ENCODE measurements at regions of chr22 and their contacts with region 1.

Region 1: DNA sequence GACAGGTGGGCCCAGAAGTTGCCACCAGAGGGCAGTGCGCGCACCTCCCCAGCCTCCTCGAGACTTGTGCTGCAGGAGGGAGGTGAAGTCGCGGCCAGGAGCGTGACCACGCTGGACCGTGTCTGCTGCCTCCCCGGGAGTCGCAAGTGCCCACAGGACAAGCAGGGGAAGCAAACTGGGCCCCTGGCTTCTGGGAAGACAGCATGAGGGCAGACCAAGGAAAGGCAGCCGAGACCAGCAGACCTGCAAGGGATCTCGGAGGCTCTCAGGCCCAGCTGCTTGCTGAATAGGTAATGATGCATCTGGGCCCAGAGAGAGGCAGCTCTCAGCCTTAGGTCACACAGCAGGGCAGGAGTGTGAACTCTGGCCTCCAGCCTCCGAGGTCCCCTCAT is 17.0 kb upstream of the IL2RB start:
- DNase-seq: peak; percentile 70 to 87 (median 75)
- H3K4me3 ChIP-seq: peak overlapping the region; percentile 63
- H3K4me3 Mint-ChIP-seq: peak overlapping the region; percentile 82 to 97 (median 89)
- H3K27ac ChIP-seq: peak overlapping the region; percentile 48
- H3K27ac Mint-ChIP-seq: peak overlapping the region; percentile 85 to 99 (median 96)
- H3K4me1 ChIP-seq: peaks cover 89% of the 10 kb centered on the region
- H3K4me1 Mint-ChIP-seq: peaks cover 95 to 100% (median 98%) of the 10 kb centered on the region in 3 donors
- H3K27me3 ChIP-seq: no peaks in the 10 kb centered on the region
- H3K27me3 Mint-ChIP-seq: no peaks in the 10 kb centered on the region

Region 2: DNA sequence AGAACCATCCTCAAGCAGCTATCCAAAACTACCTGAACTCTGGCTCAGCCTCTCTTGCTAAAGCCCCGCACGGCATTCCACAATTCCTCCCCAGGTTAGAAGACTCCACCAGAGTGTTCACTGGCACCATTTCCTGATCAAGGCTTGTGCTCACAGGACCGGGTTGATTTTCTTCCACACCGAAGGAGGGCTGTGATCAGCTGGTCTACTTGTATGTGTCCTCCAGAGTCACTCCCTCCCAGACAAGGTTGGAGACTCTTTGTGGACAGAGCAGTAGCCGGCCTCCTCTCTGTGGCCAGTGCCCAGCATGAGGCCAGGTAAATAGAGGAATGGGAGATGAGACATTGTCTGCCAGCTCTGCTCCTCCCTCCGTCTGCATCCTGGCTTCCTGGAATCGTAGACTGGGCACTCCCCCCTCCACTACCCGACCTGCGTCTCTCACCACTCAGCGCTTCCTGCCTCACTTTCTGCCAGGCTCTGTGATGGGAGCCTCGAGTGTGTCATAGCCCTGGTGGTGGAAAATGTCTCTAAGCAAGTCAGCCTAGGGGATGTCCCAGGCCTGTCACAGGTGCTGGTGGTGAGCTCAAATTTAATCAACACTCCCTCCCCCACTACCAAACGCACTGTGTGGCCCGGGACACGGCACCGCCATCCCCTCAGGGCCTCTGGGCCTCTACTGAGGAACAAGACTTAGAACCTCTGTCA is 44.6 kb before region 1 on chr22:
- CTCF ChIA-PET with region 1: interaction called, 22 read pairs
- POLR2A ChIA-PET with region 1: interaction called, 6 read pairs
- DNase-seq: peak; percentile 87 to 97 (median 94)
- H3K4me3 ChIP-seq: peak overlapping the region; percentile 65
- H3K4me3 Mint-ChIP-seq: peak overlapping the region; percentile 4 to 89 (median 73)
- H3K27ac ChIP-seq: peak overlapping the region; percentile 95
- H3K27ac Mint-ChIP-seq: peak overlapping the region; percentile 96 to 100 (median 99)
- H3K4me1 ChIP-seq: peaks cover 30% of the 10 kb centered on the region
- H3K4me1 Mint-ChIP-seq: peaks cover 41 to 76% (median 48%) of the 10 kb centered on the region in 3 donors
- H3K27me3 ChIP-seq: no peaks in the 10 kb centered on the region
- H3K27me3 Mint-ChIP-seq: peaks cover 0 to 1% of the 10 kb centered on the region in 2 donors

Region 3: DNA sequence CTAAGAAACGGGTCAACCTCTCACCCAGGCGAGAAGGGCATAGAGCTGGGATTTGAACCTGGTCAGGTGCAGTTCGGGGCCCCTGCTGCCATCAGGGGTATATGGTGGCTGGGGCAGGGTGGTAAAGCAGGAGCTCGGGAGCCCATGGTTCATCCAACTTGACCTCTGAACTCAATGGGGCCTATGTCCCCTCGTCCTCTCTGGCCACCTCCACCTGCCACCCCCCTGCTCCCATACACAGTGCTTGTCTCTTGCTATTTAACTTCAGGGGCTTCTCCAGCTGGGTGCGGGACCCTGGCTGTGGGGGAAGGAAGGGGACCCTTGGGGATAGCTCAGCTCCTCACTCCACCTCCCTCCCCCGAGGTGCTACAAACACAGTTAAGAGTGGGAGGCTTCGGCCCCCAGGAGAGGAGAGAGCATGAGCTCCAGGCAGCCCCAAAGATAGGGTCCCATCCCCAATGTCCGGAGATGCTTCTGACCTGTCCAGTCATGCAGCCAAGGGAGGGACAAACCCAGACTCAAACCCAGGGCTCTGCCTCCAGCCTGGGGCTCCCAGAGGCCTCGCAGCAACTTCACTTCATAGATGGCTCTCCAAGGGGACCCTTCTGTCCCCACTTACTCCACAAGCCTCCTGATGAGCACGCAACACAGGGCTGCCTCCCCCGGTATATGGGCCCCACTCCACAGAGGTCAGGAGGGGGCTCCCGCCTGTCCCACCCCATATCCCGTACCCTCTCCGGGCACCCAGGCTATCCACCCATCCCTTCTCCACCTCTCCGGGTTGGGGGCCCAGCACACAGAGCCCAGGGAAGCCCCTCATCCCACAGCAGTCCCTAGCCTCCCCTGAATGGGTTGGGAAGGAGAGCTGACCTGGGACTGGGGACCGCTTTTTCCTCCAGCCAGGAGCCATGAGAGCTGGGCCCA is 17.7 kb before region 1 on chr22:
- CTCF ChIA-PET with region 1: interaction called, 124 read pairs
- POLR2A ChIA-PET with region 1: interaction called, 48 read pairs
- DNase-seq: no peak
- H3K4me3 ChIP-seq: peak overlapping the region; percentile 86
- H3K4me3 Mint-ChIP-seq: peak overlapping the region; percentile 88 to 97 (median 96)
- H3K27ac ChIP-seq: peak overlapping the region; percentile 88
- H3K27ac Mint-ChIP-seq: peak overlapping the region; percentile 96 to 100 (median 98)
- H3K4me1 ChIP-seq: peaks cover 67% of the 10 kb centered on the region
- H3K4me1 Mint-ChIP-seq: peaks cover 62 to 70% (median 65%) of the 10 kb centered on the region in 3 donors
- H3K27me3 ChIP-seq: no peaks in the 10 kb centered on the region
- H3K27me3 Mint-ChIP-seq: peaks cover 0 to 4% of the 10 kb centered on the region in 2 donors

Region 4: DNA sequence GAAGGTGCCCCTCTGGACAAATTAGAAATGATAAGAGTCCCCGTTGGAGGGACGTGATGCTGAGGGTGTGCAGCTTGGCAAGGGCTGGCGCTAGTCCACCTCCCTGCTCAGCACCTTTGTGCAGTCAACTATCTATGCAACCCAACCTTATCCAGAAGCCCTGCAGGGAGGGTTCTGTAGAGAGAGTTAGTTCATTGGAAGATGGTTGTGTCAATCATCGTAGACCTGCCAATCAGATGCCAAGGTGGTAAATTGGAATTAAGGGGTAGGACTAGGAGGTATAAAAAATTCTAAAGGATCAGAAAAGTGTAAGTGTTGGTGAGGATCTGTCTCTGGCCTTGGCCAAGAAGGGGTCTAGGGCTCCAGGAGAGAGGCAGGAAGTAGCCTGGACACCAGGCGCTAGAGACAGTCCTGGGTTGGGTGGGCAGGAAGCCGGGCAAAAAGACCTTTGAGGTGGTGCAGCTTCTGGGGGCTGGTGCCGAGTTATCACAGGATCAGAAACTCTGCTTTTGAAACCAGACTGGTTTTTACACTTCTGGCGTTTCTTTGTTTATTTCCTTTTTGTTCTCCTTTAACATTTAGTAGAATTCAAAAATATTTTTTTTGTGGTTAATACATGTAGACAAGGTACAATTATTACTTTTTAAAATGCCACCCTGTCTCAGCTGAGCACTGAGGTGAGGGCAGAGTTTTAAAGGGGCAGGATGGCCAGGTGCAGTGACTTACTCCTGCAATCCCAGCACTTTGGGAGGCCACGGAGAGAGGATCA is 19.7 kb after region 1 on chr22:
- CTCF ChIA-PET with region 1: interaction called, 26 read pairs
- POLR2A ChIA-PET with region 1: interaction called, 9 read pairs
- DNase-seq: peak; percentile 33 to 80 (median 79)
- H3K4me3 ChIP-seq: peak overlapping the region; percentile 25
- H3K4me3 Mint-ChIP-seq: peak overlapping the region; percentile 29 to 81 (median 75)
- H3K27ac ChIP-seq: no peak overlapping the region
- H3K27ac Mint-ChIP-seq: peak overlapping the region; percentile 77 to 98 (median 91)
- H3K4me1 ChIP-seq: peaks cover 55% of the 10 kb centered on the region
- H3K4me1 Mint-ChIP-seq: peaks cover 61 to 82% (median 65%) of the 10 kb centered on the region in 3 donors
- H3K27me3 ChIP-seq: no peaks in the 10 kb centered on the region
- H3K27me3 Mint-ChIP-seq: no peaks in the 10 kb centered on the region

Region 5: GRCh38 chr22:37244114-37244921 is 77.6 kb after region 1 on chr22 and contains the start of gene RAC2:
- CTCF ChIA-PET with region 1: interaction called, 17 read pairs
- POLR2A ChIA-PET with region 1: interaction called, 4 read pairs
- DNase-seq: peak; percentile 77 to 93 (median 83)
- H3K4me3 ChIP-seq: peak within 1 kb of the TSS; percentile 100
- H3K4me3 Mint-ChIP-seq: peak within 1 kb of the TSS; percentile 88 to 98 (median 93)
- H3K27ac ChIP-seq: peak within 1 kb of the TSS; percentile 91
- H3K27ac Mint-ChIP-seq: peak within 1 kb of the TSS; percentile 79 to 100 (median 98)
- H3K4me1 ChIP-seq: peaks cover 48% of the 10 kb centered on the region
- H3K4me1 Mint-ChIP-seq: peaks cover 49 to 58% (median 50%) of the 10 kb centered on the region in 3 donors
- H3K27me3 ChIP-seq: no peaks in the 10 kb centered on the region
- H3K27me3 Mint-ChIP-seq: no peaks in the 10 kb centered on the region
- total RNA-seq, gene RAC2: 433 to 452 TPM

Measured in CD8-positive, alpha-beta memory T cell (primary cell).